Dorsolateral prefrontal cortex (tissue), 120 donors: ENCODE measurements at regions of chrX and their contacts with region 1.

Region 1: GRCh38 chrX:155048977-155049619 is 21.8 kb downstream of the CMC4 start:
- DNase-seq: peak in 3 of 10 donors; percentile 45 to 52 (median 52)
- H3K4me3 ChIP-seq: no peak overlapping the region
- H3K27ac ChIP-seq: peak overlapping the region in 1 of 59 donors; percentile 5
- H3K27me3 ChIP-seq: peaks cover 0 to 58% (median 0%) of the 10 kb centered on the region in 45 donors
- CTCF ChIP-seq: peak in 54 of 56 donors; percentile 17 to 70 (median 55)

Region 2: DNA sequence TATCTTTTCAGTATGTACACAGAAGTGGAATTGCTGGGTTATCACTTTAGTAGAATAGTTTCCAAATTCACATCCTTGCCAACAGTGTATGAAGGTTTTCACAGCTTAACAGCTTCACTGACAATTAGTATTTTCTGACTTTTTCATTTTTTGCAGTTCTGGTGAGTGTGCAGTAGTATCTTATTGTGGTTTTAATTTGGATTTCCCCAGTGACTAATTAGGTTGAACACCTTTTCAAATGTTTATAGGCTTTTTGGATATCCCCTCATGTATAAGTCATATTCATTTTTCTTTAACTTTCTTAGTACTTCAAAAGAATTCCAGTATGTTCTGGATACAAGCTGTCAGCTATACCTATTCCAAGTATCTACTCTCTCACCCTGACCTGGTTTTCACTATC is 59.3 kb after region 1 on chrX:
- intact Hi-C with region 1: loop called in 1 of 2 experiments (anchors 10 kb)
- DNase-seq: no peak
- H3K4me3 ChIP-seq: no peak overlapping the region
- H3K27ac ChIP-seq: no peak overlapping the region
- H3K27me3 ChIP-seq: peaks cover 0 to 18% (median 0%) of the 10 kb centered on the region in 45 donors
- CTCF ChIP-seq: no peak